Natural killer cell (primary cell): ENCODE measurements at regions of chr1 and their contacts with region 1.

Region 1: DNA sequence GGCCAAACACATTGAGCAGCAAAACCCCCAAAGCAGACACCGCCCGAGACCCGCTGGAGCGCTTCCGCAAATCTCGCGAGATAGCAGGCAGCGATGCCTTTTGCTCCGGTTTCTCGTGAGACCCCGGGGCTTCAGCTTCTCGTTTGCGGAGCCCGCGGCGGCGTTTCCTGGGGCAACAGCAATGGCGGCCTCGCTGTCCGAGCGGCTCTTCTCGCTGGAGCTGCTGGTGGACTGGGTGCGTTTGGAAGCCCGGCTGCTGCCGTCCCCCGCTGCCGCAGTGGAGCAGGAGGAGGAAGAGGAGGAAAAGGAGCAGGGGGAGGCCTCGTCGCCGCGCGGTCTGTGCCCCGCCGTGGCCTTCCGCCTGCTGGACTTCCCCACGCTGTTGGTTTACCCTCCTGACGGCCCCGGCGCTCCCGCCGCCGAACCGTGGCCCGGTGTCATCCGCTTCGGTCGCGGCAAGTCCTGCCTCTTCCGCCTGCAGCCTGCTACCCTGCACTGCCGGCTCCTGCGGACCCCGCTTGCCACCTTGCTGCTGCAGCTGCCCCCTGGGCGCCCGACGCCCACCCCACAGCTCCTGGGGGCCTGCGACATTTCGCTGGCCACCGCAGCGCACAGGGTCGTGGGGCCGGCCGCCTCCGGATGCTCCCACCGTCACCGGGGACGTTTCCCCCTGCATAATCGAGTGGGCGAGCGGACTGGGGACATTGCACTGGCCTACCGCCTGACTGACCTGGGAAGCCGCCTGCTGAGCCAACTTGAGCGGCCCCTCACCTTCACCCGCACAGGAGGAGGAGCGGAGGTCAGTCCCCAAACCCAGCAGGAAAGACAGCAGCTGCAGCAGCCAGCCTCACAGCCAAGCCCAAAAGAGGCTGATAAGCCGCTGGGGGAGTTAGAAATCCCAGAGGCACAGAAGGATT is at the start of gene MAP10:
- DNase-seq: peak; percentile 57 to 84
- ATAC-seq: peak; percentile 84 to 91 (median 86)
- H3K4me3 ChIP-seq: peak within 1 kb of the TSS; percentile 94
- H3K4me3 Mint-ChIP-seq: peak within 1 kb of the TSS; percentile 91
- H3K27ac ChIP-seq: peak within 1 kb of the TSS; percentile 76
- H3K27ac Mint-ChIP-seq: peak within 1 kb of the TSS; percentile 83 to 84
- H3K4me1 ChIP-seq: peaks cover 13% of the 10 kb centered on the region
- H3K4me1 Mint-ChIP-seq: peaks cover 24 to 30% of the 10 kb centered on the region in 2 donors
- H3K27me3 ChIP-seq: peaks cover 7% of the 10 kb centered on the region
- H3K27me3 Mint-ChIP-seq: peaks cover 7 to 14% of the 10 kb centered on the region in 2 donors
- CTCF ChIP-seq: no peak
- total RNA-seq, gene MAP10: 0.95 to 1.9 (median 1.2) TPM

Region 2: GRCh38 chr1:232950197-232951176 is 145.0 kb after region 1 on chr1 and contains the start of gene NTPCR:
- intact Hi-C with region 1: loop called (anchors 1 kb)
- DNase-seq: peak; percentile 94 to 97
- ATAC-seq: peak; percentile 86 to 88 (median 87)
- H3K4me3 ChIP-seq: peak within 1 kb of the TSS; percentile 68
- H3K4me3 Mint-ChIP-seq: peak within 1 kb of the TSS; percentile 93
- H3K27ac ChIP-seq: peak within 1 kb of the TSS; percentile 60
- H3K27ac Mint-ChIP-seq: peak within 1 kb of the TSS; percentile 90 to 94
- H3K4me1 ChIP-seq: peaks cover 19% of the 10 kb centered on the region
- H3K4me1 Mint-ChIP-seq: peaks cover 39 to 47% of the 10 kb centered on the region in 2 donors
- H3K27me3 ChIP-seq: no peaks in the 10 kb centered on the region
- H3K27me3 Mint-ChIP-seq: no peaks in the 10 kb centered on the region
- CTCF ChIP-seq: no peak
- total RNA-seq, gene NTPCR: 12.9 to 25.7 (median 17.4) TPM